GM10248 (cell line): ENCODE measurements at regions of chr2 and their contacts with region 1.

Region 1: GRCh38 chr2:48696881-48697280 is 58.6 kb downstream of the LHCGR start:
- DNase-seq: no peak
- CTCF ChIP-seq: no peak

Region 2: GRCh38 chr2:48617618-48618017 is 79.3 kb before region 1 on chr2 and contains the start of gene GTF2A1L:
- CTCF ChIA-PET with region 1: no interaction called
- POLR2A ChIA-PET with region 1: no interaction called
- DNase-seq: no peak
- CTCF ChIP-seq: no peak

Region 3: DNA sequence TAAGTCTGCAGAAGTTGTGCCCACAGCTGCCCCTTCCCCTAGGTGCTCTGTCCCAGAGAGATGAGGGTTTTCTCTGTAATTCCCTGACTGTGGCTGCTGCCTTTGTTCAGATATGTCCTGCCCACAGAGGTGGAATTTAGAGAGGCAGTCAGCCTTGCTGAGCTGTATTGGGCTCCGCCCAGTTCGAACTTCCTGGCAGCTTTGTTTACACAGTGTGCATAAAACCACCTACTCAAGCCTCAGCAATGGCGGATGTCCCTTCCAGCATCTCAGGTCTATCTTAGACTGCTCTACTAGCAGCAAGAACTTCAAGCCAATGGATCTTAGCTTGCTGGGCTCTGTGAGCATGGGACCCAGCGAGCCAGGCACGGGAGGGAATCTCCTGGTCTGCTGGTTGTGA is 10.6 kb after region 1 on chr2:
- CTCF ChIA-PET with region 1: interaction called, 10 read pairs
- POLR2A ChIA-PET with region 1: no interaction called
- DNase-seq: no peak
- CTCF ChIP-seq: no peak